ENCODE measurements at regions of chr2 and their contacts with region 1.

Region 1: GRCh38 chr2:113080134-113080533 is 12.4 kb downstream of the IL1F10 start:
- DNase-seq: peak; percentile 60
- H3K4me3 Mint-ChIP-seq: no peak overlapping the region
- H3K27ac Mint-ChIP-seq: no peak overlapping the region
- H3K4me1 Mint-ChIP-seq: peaks cover 6% of the 10 kb centered on the region
- H3K27me3 Mint-ChIP-seq: peaks cover 15% of the 10 kb centered on the region

Region 2: DNA sequence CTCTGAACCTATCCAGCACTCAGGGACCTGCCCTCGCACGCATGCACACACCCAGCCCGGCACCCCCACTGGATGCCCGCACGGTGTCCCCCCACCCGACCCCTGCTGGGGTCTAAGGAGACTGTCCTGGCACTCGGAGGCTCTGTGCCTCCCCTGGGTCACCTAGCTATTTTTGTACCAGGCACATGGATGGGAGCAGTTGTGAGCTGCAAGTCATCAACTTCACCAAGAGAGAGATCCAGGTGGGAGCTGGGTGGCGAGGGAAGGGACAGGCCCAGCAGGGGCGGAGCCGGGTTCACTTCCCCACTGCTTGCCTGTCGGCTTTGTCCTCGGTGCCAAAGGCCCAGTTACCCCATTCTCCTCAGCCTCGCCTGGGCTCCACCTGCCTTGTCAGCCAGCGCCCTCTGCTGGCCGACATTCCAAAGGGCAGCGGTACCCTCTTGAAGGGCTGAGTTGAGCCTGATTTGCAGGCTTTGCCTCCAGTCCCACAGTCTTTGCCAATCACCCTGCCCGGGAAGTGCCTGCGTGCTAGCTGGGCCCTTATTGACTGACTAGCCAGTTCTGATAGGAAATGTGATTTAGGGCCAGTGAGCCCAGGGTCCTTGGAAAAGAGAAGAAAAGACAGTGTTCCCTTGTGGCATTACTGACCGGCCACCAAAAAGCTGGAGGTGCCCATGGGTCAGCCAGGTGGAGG is 353.5 kb before region 1 on chr2:
- CTCF ChIA-PET with region 1: no interaction called
- POLR2A ChIA-PET with region 1: no interaction called
- DNase-seq: peak; percentile 93
- H3K4me3 Mint-ChIP-seq: no peak overlapping the region
- H3K27ac Mint-ChIP-seq: peak overlapping the region; percentile 49
- H3K4me1 Mint-ChIP-seq: peaks cover 27% of the 10 kb centered on the region
- H3K27me3 Mint-ChIP-seq: no peaks in the 10 kb centered on the region

Region 3: DNA sequence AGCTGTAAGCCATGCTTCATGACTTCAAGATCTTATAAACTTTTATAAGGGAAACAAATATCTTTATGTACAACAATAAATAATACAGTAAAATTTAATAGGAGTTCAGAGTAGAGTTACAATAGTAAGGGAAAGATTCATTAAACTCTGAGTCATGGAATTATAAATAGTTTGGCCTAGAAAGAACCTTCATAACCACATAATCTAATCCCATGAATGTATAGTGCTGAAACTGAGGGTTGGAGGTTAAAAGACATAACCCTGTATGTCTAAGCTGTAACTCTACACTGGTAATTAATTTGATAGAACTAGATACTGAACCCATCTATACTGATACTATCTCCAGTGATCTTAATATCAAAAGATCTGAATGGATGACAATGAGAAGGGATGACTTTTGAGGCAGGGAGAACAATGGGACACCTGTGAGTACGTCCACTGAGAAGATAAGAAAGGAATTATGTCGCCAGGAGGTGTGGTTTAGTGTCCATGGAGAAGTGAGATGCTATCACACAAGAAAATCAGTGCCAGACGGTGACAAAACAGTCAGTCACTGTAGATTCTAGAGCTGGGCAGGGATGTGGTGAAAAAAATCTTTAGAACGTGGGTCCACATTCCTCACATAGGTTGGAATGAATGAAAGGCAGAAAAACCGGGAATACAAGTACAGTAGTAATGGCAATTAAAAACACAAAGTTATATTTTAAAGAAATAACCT is 11.3 kb before region 1 on chr2:
- CTCF ChIA-PET with region 1: interaction called, 10 read pairs
- POLR2A ChIA-PET with region 1: no interaction called
- DNase-seq: no peak
- H3K4me3 Mint-ChIP-seq: no peak overlapping the region
- H3K27ac Mint-ChIP-seq: no peak overlapping the region
- H3K4me1 Mint-ChIP-seq: no peaks in the 10 kb centered on the region
- H3K27me3 Mint-ChIP-seq: peaks cover 16% of the 10 kb centered on the region

Region 4: GRCh38 chr2:113181258-113182051 is 101.3 kb after region 1 on chr2:
- CTCF ChIA-PET with region 1: interaction called, 17 read pairs
- POLR2A ChIA-PET with region 1: no interaction called
- DNase-seq: peak; percentile 45
- H3K4me3 Mint-ChIP-seq: peak overlapping the region; percentile 27
- H3K27ac Mint-ChIP-seq: peak overlapping the region; percentile 71
- H3K4me1 Mint-ChIP-seq: peaks cover 93% of the 10 kb centered on the region
- H3K27me3 Mint-ChIP-seq: no peaks in the 10 kb centered on the region

Region 5: DNA sequence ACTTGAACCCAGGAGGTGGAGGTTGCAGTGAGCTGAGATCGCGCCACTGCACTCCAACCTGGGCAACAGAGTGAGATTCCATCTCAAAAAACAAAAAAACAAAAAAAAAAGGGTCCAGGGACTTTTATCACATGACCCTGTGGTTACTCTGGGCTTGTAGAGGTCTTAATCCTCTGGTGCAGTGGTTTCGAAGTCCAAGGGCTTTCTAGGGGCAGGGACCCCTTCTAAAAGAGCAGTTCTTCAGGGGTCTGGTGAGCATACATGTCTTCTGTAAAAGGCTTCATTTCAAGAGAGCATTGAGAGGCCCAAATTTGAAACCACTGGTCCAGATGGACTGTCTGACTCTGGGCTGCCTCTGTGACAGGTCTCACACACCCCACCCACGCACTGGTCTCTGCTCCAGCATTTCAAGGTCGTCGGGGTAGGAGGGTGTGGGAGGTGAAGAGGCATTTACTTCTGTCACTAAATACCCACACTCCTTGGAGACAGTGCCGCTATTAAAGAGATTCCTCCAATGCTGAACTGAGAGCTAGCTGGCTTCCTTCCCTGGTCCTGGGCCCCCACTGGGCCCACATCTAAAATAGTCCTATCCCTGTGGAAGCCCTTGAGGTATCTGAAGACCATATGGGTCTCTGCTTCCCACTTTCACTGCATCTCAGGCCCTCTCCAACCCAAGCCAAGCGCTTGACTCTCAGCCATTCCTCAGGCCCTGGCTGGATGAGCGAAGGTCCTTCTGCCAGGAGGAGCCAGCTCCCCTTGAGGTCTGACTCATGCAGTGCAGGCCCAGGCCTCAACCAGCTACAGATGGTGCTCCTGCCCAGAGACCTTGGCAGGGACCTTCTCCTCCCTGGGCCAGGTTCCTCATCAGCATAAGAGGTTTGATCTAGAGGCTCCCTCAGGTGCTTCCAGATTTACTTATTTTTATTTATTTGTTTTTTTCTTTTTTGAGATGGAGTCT is 153.7 kb after region 1 on chr2:
- CTCF ChIA-PET with region 1: interaction called, 13 read pairs
- POLR2A ChIA-PET with region 1: no interaction called
- DNase-seq: no peak
- H3K4me3 Mint-ChIP-seq: peak overlapping the region; percentile 15
- H3K27ac Mint-ChIP-seq: no peak overlapping the region
- H3K4me1 Mint-ChIP-seq: peaks cover 53% of the 10 kb centered on the region
- H3K27me3 Mint-ChIP-seq: peaks cover 1% of the 10 kb centered on the region

Region 6: DNA sequence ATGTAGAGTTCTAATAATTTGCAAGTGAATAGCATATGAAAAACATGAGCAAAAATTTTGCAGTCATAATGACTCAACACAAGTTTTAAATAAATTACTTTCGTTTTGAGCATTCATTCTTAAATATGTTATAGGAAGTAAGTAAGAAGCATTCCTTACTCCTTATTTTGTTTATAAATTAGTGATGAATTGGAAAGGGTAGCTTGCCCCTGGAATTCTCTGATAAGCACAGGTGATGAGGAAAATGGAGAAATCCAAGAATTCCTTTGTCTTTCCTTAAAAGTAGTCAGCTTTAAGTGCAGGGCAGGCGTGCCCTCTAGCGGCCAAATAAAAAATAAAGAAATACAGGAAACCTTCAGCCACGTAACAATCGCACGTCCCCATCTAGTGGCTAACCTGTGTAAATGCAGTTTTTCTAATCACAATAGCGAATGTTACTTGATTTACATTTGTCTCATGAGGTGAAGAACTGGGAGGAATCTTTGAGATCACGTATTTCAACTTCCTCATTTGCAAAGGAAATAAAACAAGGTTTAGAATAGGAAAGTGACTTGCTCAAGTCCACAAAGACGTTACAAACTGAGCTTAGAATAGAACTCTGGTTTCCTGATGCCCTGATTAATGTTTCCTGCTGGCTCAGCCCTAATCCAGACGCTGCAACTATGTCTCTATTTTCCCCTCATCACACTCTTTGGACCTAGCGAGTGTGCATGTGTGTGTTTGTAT is 310.2 kb after region 1 on chr2:
- CTCF ChIA-PET with region 1: interaction called, 18 read pairs
- POLR2A ChIA-PET with region 1: no interaction called
- DNase-seq: peak; percentile 62
- H3K4me3 Mint-ChIP-seq: peak overlapping the region; percentile 53
- H3K27ac Mint-ChIP-seq: peak overlapping the region; percentile 16
- H3K4me1 Mint-ChIP-seq: peaks cover 16% of the 10 kb centered on the region
- H3K27me3 Mint-ChIP-seq: peaks cover 21% of the 10 kb centered on the region

Measured in activated CD4-positive, alpha-beta memory T cell treated with anti-CD3 and anti-CD28 coated beads, Interleukin-2, amount 10 ng/mL, durations not matched to agents 7 days and 5 days (primary cell).